Lower leg skin (tissue), 4 donors: ENCODE measurements at regions of chr12 and their contacts with region 1.

Region 1: GRCh38 chr12:40701756-40702155 is 9.5 kb downstream of the CNTN1 start:
- DNase-seq: no peak
- H3K4me3 ChIP-seq: no peak overlapping the region
- CTCF ChIP-seq: no peak
- POLR2A ChIP-seq: no peak

Region 2: DNA sequence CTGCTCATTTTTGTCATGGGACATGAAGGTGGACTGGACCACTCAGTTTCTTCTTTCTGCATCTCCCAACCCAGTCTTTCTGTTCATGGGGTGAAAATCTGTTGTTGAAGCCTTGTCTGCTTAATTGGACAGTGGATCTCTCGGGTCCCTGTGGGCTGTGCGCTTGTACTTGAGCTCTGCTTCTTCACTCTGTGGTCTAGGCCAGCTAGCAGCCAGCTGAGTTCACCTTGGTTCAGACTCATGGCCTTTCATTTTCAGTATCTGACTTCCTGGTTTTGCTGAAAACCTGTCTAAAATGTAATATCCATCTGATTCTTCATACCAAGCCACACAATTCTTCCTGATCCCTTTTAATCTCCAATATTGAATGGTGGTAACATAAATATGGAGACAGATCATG is 359.7 kb before region 1 on chr12:
- intact Hi-C with region 1: loop called (anchors 5 kb)
- DNase-seq: no peak
- H3K4me3 ChIP-seq: no peak overlapping the region
- CTCF ChIP-seq: no peak
- POLR2A ChIP-seq: no peak

Region 3: DNA sequence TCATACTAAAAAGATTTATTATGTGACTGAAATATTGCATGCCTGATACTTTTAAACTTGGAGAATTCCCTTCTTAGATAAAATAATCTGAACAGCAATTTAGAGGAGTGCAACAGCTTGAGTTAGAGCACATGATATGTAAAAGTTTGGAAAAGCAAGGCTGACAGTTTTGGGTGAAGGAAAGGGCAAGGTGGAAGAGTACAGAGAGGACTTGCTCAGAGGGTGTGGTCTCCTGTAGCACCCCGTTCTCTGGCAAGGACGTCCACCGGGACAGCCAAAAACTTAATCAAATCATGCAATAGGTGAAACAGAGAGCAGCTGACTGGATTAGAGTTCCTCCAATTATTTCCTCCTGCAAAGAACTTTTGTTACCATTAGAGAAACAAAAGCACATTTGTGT is 421.1 kb after region 1 on chr12:
- intact Hi-C with region 1: no loop called
- DNase-seq: peak in 1 of 2 donors; percentile 77
- H3K4me3 ChIP-seq: no peak overlapping the region
- CTCF ChIP-seq: no peak
- POLR2A ChIP-seq: no peak